GM12878 (cell line): ENCODE measurements at regions of chr3 and their contacts with region 1.

Region 1: GRCh38 chr3:152508705-152509104 is 240.0 kb downstream of the MBNL1 start:
- DNase-seq: no peak
- ATAC-seq: peak; percentile 29; the same call in 2 of the 3 replicates
- H3K4me3 ChIP-seq: no peak overlapping the region
- H3K27ac ChIP-seq: no peak overlapping the region; the same call in 1 of the 2 replicates
- H3K4me1 ChIP-seq: peaks cover 26% of the 10 kb centered on the region
- H3K27me3 ChIP-seq: no peaks in the 10 kb centered on the region
- CTCF ChIP-seq: peak; percentile 31 to 36 (median 35); a peak in 4 of 6 replicates
- EP300 ChIP-seq: no peak
- POLR2A ChIP-seq: no peak
- RAD21 ChIP-seq: peak; percentile 69

Region 2: DNA sequence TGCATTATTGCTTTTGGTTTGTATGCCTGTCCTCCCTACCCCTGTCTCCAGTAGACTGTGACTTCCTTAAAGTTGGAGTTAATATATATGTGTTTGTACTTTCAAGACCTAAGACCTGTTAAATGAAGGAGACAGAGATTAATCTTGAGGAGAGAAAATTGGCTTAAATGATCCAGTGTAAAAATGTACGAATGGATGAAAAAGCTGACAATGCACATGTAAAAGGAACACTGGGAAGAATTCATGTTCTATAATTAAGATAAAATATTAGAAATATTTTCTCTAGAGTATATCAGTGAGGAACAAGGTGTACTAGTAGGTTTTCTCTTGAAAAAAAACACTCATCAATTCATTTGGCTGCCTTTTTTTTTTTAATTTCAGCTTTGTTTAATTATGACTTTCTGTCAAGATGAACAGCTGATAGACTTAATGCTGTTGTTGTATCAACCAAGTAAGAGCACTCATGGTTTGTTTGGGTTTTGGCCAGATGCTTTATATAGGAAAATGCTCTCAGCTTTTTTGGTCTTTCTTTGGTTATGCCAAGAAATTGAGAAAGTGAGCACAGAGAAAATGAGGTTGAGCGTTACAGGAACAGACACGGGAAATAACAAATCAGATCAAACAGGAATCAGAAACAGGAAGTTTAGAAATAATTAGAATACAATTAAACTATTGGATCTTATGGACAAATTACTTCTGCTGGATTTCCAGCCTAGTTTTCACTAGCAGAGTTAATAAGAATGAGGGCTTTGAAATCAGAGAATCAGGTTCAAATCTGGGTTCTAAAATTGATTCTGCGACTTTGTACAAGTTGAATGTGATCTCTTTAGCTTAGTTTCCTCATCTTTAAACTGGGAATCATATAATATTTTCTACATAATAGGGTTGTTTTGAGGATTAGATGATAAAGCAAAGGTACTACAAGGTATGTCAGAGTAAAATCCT is 733.1 kb before region 1 on chr3:
- CTCF ChIA-PET with region 1: no interaction called
- POLR2A ChIA-PET with region 1: no interaction called
- RAD21 ChIA-PET with region 1: no interaction called
- SMC1A ChIA-PET with region 1: no interaction called
- in situ Hi-C with region 1: no loop called
- intact Hi-C with region 1: no loop called
- DNase-seq: no peak
- ATAC-seq: no peak
- H3K4me3 ChIP-seq: no peak overlapping the region
- H3K27ac ChIP-seq: no peak overlapping the region
- H3K4me1 ChIP-seq: no peaks in the 10 kb centered on the region
- H3K27me3 ChIP-seq: no peaks in the 10 kb centered on the region
- CTCF ChIP-seq: no peak
- EP300 ChIP-seq: no peak
- POLR2A ChIP-seq: no peak
- RAD21 ChIP-seq: no peak

Region 3: DNA sequence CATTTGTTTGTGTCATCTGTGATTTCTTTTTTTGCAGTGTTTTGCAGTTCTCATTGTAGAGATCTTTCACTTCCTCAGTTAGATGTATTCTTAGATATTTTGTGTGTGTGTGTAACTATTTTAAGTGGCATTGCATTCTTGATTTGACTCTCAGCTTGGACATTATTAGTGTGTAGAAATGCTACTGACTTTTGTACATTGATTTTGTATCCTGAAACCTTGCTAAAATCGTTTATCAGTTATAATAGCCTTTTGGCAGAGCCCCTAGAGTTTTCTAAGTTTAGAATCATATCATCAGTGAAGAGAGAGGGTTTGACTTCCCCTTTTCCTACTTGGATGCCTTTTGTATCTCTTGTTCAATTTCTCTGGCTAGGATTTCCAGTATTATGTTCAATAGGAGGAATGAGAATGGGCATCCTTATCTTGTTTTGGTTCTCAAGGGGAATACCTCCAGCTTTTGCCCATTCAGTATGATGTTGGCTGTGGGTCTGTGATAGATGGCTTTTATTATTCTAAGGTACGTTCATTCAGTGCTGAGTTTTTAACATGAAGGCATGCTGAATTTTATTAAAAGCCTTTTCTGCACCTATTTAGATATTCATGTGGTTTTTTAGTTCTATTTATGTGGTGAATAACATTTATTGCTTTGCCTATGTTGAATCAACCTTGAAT is 28.3 kb before region 1 on chr3:
- CTCF ChIA-PET with region 1: interaction called, 379 read pairs
- POLR2A ChIA-PET with region 1: interaction called, 5 read pairs
- RAD21 ChIA-PET with region 1: interaction called, 13 read pairs
- SMC1A ChIA-PET with region 1: interaction called, 137 read pairs
- in situ Hi-C with region 1: no loop called
- intact Hi-C with region 1: no loop called
- DNase-seq: peak; percentile 77
- ATAC-seq: peak; percentile 86
- H3K4me3 ChIP-seq: peak overlapping the region; percentile 34; the same call in 1 of the 2 replicates
- H3K27ac ChIP-seq: peak overlapping the region; percentile 87
- H3K4me1 ChIP-seq: peaks cover 13% of the 10 kb centered on the region; the same call in 1 of the 2 replicates
- H3K27me3 ChIP-seq: no peaks in the 10 kb centered on the region
- CTCF ChIP-seq: no peak
- EP300 ChIP-seq: peak; percentile 94 to 95
- POLR2A ChIP-seq: no peak
- RAD21 ChIP-seq: no peak

Region 4: GRCh38 chr3:152497457-152497856 is 11.2 kb before region 1 on chr3:
- CTCF ChIA-PET with region 1: interaction called, 246 read pairs
- POLR2A ChIA-PET with region 1: interaction called, 4 read pairs
- RAD21 ChIA-PET with region 1: interaction called, 7 read pairs
- SMC1A ChIA-PET with region 1: interaction called, 28 read pairs
- in situ Hi-C with region 1: no loop called
- intact Hi-C with region 1: loop called (anchors 2 kb)
- DNase-seq: no peak
- ATAC-seq: no peak
- H3K4me3 ChIP-seq: peak overlapping the region; percentile 13; the same call in 1 of the 2 replicates
- H3K27ac ChIP-seq: peak overlapping the region; percentile 50
- H3K4me1 ChIP-seq: no peaks in the 10 kb centered on the region; the same call in 1 of the 2 replicates
- H3K27me3 ChIP-seq: no peaks in the 10 kb centered on the region
- CTCF ChIP-seq: no peak
- EP300 ChIP-seq: no peak
- POLR2A ChIP-seq: no peak
- RAD21 ChIP-seq: no peak

Region 5: DNA sequence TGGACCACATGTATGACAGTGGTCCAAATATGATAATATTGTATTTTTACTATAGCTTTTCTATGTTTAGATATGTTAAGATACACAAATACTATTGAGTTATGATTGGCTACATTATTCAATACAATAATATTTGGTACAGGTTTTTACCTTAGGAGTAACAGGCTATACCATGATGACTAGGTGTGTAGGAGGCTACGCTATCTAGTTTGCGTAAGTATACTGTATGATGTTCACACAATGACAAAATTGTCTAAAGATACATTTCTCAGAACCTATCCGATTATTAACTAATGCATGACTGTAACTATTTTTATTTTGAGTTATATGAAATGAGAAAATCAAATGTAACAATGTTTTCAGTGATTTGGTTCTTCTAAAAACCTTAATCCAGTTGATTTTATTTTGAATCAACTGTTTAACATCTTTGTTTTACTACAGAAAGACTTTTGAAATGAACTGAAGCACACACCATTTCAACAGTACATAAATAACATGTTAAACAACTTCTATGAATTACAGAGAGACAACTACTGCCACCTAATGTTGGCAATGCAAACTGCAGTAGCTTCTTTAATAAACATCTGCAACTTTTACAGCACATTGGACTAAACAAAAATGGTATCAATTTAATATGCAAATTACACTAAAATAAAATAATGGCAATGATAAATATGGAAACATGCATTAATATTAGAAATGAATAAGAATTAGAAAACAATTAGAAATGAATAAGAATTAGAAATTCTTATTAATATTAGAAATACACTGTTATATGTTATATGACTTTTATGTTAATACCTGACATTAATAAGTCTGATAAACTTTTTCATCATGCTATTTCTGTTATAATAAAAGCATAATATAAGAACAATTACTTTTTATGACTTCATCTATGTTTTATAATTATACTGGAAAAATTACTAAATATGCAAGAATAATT is 15.8 kb after region 1 on chr3:
- CTCF ChIA-PET with region 1: interaction called, 246 read pairs
- POLR2A ChIA-PET with region 1: interaction called, 4 read pairs
- RAD21 ChIA-PET with region 1: interaction called, 81 read pairs
- SMC1A ChIA-PET with region 1: interaction called, 248 read pairs
- in situ Hi-C with region 1: no loop called
- intact Hi-C with region 1: loop called (anchors 1 kb)
- DNase-seq: no peak
- ATAC-seq: peak; percentile 74
- H3K4me3 ChIP-seq: no peak overlapping the region
- H3K27ac ChIP-seq: no peak overlapping the region
- H3K4me1 ChIP-seq: no peaks in the 10 kb centered on the region
- H3K27me3 ChIP-seq: no peaks in the 10 kb centered on the region
- CTCF ChIP-seq: peak; percentile 69 to 80 (median 79); a peak in 5 of 6 replicates
- EP300 ChIP-seq: no peak
- POLR2A ChIP-seq: no peak
- RAD21 ChIP-seq: peak; percentile 90

Region 6: DNA sequence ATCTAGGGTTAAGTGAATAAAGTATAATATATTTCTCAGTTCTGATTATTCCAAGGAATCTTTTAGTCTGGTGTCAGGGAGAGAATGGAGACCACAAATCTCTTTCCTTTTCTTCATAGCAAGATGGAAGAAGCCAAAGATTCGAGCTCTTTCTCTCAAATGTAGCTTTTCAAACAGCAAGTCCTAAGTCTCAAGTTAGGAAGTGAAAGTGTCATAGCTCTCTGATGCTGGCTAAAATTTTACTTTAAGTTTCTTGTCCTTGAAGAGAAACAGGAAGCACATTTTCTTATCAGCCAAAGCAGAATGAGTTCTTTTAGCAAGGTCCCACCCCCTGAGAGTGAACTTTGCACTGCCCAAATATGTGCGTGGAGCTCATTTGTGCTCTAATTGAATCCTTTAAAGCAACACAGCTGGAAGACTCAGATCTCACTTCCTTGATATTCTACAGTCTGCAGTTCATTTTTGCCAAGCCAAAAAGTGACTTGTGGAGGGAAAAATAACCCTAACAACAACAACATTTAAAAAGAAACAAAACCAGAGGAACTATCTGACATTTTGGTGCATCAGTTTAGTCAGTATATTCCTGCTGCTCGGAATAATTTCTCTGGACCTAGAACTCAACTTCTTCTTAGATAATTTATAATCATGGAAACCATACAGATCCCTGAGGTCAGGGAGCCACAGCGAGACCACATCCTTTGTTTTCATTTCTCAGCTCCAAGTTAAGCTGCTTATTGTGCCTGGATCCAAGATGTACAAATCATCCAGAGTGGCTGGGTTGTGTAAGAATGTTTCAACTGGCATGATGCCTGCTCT is 87.5 kb after region 1 on chr3:
- CTCF ChIA-PET with region 1: interaction called, 3 read pairs
- POLR2A ChIA-PET with region 1: interaction called, 3 read pairs
- RAD21 ChIA-PET with region 1: interaction called, 6 read pairs
- SMC1A ChIA-PET with region 1: interaction called, 10 read pairs
- in situ Hi-C with region 1: no loop called
- intact Hi-C with region 1: no loop called
- DNase-seq: peak; percentile 88
- ATAC-seq: peak; percentile 99
- H3K4me3 ChIP-seq: no peak overlapping the region
- H3K27ac ChIP-seq: peak overlapping the region; percentile 16
- H3K4me1 ChIP-seq: peaks cover 7% of the 10 kb centered on the region
- H3K27me3 ChIP-seq: no peaks in the 10 kb centered on the region
- CTCF ChIP-seq: no peak
- EP300 ChIP-seq: no peak; a peak in 2 of 4 replicates
- POLR2A ChIP-seq: no peak
- RAD21 ChIP-seq: no peak